Activated naive CD4-positive, alpha-beta T cell treated with anti-CD3 and anti-CD28 coated beads for 36 hours (primary cell): ENCODE measurements at regions of chr13 and their contacts with region 1.

Region 1: DNA sequence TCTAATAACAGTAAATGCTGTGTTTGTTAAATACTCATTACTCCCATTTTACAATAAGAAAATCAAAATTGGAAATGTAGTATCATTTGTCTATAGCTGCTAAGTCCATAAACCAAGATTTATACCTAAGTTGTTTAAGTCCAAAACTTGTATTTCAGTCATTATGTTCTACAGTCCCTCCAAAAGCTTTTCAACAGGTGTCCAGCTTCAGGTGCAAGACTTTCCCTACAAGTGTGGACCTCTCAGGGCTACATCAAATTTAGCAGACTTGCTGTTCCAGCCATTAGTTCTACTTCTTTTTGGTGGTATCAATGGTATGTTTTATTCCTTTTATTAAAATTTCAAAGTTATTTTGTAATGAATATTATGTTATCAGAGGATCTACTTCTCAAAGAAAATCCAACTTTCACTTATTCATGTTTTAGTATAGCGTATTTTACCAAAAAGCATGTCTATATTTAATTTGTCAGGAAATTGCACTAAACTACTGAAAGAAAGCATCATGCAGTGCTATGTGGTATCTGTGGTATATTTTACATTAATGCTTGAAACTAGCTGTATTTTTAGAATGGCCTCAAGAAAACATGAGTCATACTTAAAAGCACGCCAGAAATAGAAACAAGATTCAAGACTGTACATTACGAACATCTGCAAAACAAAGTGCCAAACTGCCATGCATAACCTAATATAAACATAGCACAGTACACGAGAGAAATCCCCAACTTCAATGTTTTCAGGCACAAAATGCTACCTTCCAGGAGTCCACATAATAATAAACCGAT is 44.5 kb downstream of the VWA8 start:
- DNase-seq: no peak
- H3K4me3 Mint-ChIP-seq: peak overlapping the region; percentile 59
- H3K27ac Mint-ChIP-seq: peak overlapping the region; percentile 95
- H3K4me1 Mint-ChIP-seq: peaks cover 60% of the 10 kb centered on the region
- H3K27me3 Mint-ChIP-seq: no peaks in the 10 kb centered on the region

Region 2: DNA sequence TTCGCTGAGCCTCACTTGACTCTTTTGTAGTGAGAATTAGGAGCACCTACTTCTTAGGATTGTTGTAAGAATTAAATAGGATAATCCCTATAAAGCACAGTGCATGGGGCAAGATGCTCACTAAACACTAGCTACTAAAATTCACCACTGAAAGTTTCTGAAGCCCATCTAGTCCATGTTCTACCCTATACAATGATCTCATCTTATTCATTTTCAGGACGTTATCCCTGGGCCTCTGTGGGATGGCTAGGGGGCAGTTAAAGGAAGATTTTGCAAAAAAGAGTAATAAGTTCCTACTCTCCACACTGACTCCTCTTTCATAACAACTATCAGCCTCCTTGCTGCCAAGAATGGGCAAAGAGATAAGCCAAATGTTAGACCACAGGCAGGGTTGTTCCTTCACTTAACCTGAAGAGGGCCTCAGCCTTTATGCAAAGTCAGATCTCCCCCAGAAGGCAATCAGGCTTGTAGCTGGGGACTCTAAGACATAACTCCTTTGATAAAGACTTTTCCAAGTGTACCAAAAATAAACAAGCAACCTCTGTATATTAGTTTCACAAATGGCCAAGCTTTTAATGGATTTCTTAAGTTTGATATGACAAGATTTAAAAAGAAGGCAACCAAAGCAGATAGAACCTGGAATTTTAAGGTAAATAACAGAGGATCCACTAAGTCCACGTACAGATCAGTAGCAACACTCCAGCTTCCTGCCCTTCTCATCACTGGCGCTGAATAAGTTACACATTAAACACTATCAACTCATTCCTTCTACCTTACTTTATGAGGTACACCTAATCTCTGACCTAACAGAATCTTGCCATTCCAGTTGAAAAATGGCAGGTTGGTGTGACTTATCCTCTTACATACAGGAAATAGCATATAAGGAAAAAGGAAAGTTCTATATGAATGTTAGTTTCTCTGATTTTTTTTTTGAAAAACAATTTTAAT is 941.6 kb before region 1 on chr13:
- CTCF ChIA-PET with region 1: no interaction called
- intact Hi-C with region 1: loop called (anchors 10 kb)
- DNase-seq: peak; percentile 63
- H3K4me3 Mint-ChIP-seq: peak overlapping the region; percentile 36
- H3K27ac Mint-ChIP-seq: peak overlapping the region; percentile 94
- H3K4me1 Mint-ChIP-seq: peaks cover 83% of the 10 kb centered on the region
- H3K27me3 Mint-ChIP-seq: no peaks in the 10 kb centered on the region

Region 3: GRCh38 chr13:41352935-41353840 is 563.2 kb before region 1 on chr13:
- CTCF ChIA-PET with region 1: no interaction called
- intact Hi-C with region 1: loop called (anchors 1 kb)
- DNase-seq: peak; percentile 69
- H3K4me3 Mint-ChIP-seq: no peak overlapping the region
- H3K27ac Mint-ChIP-seq: peak overlapping the region; percentile 77
- H3K4me1 Mint-ChIP-seq: peaks cover 57% of the 10 kb centered on the region
- H3K27me3 Mint-ChIP-seq: no peaks in the 10 kb centered on the region

Region 4: DNA sequence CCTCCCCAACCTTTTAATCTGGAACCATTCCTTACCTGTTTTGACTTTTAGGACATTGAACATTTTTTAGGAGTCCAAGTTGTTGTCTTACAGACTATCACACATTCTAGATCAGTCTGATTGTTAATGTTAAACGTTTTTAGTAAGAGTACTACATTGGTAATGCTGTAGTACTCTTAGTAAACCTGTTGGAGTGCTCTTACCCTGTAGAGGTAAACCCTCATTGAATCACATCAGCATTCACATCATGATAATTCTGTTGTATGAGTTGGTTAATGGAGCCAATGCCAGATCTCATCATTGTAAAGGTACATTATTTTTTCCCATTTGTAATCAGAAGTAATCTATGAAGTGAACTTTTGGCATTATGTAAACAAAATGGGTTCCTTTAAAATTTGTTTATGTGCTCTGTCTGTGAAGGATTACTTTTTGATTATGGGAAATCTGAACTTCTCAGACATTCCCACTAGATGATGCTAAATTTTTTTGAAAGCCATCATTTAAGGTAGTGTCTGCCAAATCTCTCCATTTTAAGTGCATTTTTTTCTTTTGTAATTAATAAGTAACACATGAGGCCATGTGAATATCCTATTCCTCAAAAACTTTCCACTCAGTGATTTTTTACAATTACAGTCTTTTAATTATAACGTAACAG is 10.6 kb before region 1 on chr13:
- CTCF ChIA-PET with region 1: interaction called, 3 read pairs
- intact Hi-C with region 1: loop called (anchors 1 kb)
- DNase-seq: no peak
- H3K4me3 Mint-ChIP-seq: no peak overlapping the region
- H3K27ac Mint-ChIP-seq: no peak overlapping the region
- H3K4me1 Mint-ChIP-seq: peaks cover 24% of the 10 kb centered on the region
- H3K27me3 Mint-ChIP-seq: no peaks in the 10 kb centered on the region

Region 5: GRCh38 chr13:42048682-42049453 is 132.5 kb after region 1 on chr13:
- CTCF ChIA-PET with region 1: no interaction called
- intact Hi-C with region 1: loop called (anchors 2 kb)
- DNase-seq: peak; percentile 71
- H3K4me3 Mint-ChIP-seq: peak overlapping the region; percentile 89
- H3K27ac Mint-ChIP-seq: peak overlapping the region; percentile 78
- H3K4me1 Mint-ChIP-seq: peaks cover 21% of the 10 kb centered on the region
- H3K27me3 Mint-ChIP-seq: peaks cover 3% of the 10 kb centered on the region

Region 6: GRCh38 chr13:42345367-42345766 is 429.0 kb after region 1 on chr13:
- CTCF ChIA-PET with region 1: no interaction called
- intact Hi-C with region 1: no loop called
- DNase-seq: no peak
- H3K4me3 Mint-ChIP-seq: no peak overlapping the region
- H3K27ac Mint-ChIP-seq: no peak overlapping the region
- H3K4me1 Mint-ChIP-seq: peaks cover 32% of the 10 kb centered on the region
- H3K27me3 Mint-ChIP-seq: no peaks in the 10 kb centered on the region

Region 7: GRCh38 chr13:42392716-42393572 is 476.6 kb after region 1 on chr13:
- CTCF ChIA-PET with region 1: no interaction called
- intact Hi-C with region 1: loop called (anchors 5 kb)
- DNase-seq: peak; percentile 58
- H3K4me3 Mint-ChIP-seq: peak overlapping the region; percentile 84
- H3K27ac Mint-ChIP-seq: peak overlapping the region; percentile 100
- H3K4me1 Mint-ChIP-seq: peaks cover 74% of the 10 kb centered on the region
- H3K27me3 Mint-ChIP-seq: no peaks in the 10 kb centered on the region